Activated naive CD4-positive, alpha-beta T cell treated with anti-CD3 and anti-CD28 coated beads for 36 hours (primary cell): ENCODE measurements at regions of chr9 and their contacts with region 1.

Region 1: GRCh38 chr9:326667-327066 is 112.0 kb downstream of the DOCK8 start:
- DNase-seq: no peak
- H3K4me3 Mint-ChIP-seq: no peak overlapping the region
- H3K27ac Mint-ChIP-seq: no peak overlapping the region
- H3K4me1 Mint-ChIP-seq: no peaks in the 10 kb centered on the region
- H3K27me3 Mint-ChIP-seq: no peaks in the 10 kb centered on the region

Region 2: GRCh38 chr9:378263-378662 is 51.6 kb after region 1 on chr9:
- CTCF ChIA-PET with region 1: no interaction called
- intact Hi-C with region 1: loop called (anchors 5 kb)
- DNase-seq: no peak
- H3K4me3 Mint-ChIP-seq: no peak overlapping the region
- H3K27ac Mint-ChIP-seq: no peak overlapping the region
- H3K4me1 Mint-ChIP-seq: peaks cover 3% of the 10 kb centered on the region
- H3K27me3 Mint-ChIP-seq: no peaks in the 10 kb centered on the region